Endothelial cell of umbilical vein (primary cell): ENCODE measurements at regions of chr16 and their contacts with region 1.

Region 1: DNA sequence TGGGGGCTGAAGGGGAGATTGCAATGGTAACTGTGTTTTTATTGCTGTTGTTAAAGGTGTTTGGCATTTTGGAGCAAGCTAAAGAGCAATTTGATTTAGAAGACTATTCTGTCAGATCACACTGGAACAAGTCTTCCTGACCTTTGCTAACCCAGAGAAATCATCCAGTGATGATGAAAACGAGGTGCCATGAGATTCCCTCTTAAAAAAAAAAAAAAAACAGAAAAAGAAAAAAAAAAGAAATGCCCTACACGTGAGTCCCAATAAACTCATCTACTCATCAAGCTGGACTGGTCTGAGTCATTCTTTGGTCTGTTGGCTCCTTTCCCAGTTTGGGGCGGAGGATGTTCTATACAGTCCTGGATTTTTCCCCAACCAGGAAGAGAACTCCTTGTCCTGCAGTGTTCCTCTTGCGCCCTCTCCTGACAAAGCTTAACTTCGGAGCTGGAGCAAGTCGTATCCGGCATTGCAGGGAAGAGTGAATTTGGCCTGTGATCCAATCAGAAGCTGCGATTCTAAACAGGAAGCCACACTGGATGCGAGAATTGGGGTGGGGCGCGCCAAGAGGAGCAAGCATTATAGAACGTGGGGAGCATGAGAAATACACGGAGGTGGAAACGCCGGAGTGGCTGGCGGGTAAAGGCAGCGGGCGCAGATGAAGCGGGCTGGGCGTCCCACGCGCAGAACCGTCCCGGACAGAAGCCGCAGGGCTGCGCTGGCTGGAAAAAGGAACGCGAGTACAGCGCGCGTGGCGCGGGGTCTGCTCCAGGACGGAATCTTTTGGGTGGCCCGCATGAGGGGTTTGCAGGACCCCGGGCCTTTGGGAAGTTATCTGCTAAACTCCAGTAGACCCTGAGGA is 22.4 kb upstream of the CRYM start:
- DNase-seq: peak; percentile 100
- H3K4me3 ChIP-seq: peak overlapping the region; percentile 61 to 65 (median 64)
- H3K27ac ChIP-seq: no peak overlapping the region
- H3K4me1 ChIP-seq: peaks cover 6% of the 10 kb centered on the region
- H3K27me3 ChIP-seq: peaks cover 2 to 12% of the 10 kb centered on the region in 2 experiments
- CTCF ChIP-seq: peak; percentile 80 to 95
- POLR2A ChIP-seq: no peak

Region 2: DNA sequence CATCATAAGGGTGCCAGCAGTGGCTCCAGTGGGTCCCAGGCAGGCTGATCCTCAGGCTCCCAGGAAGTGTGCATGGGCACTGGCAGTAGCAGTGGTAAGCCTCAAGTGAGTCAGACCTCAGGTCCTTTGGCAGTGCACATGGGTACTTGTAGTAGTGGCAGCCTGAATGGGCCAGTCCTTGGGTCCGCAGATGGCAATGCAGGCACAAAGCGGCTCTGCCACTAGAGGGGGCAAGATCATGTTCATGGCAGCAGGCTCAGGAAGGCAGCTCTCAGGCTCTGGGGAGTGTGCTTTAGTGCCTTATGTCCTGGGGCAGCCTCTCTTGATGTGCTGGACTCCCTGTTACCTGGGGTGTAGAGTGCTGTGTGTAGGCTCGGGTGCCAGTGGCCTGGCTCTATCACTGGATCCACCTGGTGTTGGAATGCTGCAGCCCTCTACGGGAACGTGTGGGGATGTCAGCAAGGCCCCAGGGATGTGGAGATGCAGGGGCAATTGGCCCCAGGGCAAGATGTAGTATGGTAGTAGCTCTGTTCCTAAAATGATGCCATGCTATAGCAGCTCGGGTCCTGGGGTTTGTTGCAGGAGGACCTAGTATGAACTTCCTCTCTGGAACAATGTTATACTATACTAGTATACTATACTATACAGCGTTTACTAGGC is 525.7 kb before region 1 on chr16:
- CTCF ChIA-PET with region 1: interaction called, 15 read pairs
- POLR2A ChIA-PET with region 1: no interaction called
- dilution Hi-C with region 1: no loop called
- intact Hi-C with region 1: no loop called
- DNase-seq: peak; percentile 70
- H3K4me3 ChIP-seq: no peak overlapping the region
- H3K27ac ChIP-seq: no peak overlapping the region
- H3K4me1 ChIP-seq: no peaks in the 10 kb centered on the region
- H3K27me3 ChIP-seq: peaks cover 0 to 1% of the 10 kb centered on the region in 2 experiments
- CTCF ChIP-seq: peak; percentile 85 to 94
- POLR2A ChIP-seq: no peak

Region 3: DNA sequence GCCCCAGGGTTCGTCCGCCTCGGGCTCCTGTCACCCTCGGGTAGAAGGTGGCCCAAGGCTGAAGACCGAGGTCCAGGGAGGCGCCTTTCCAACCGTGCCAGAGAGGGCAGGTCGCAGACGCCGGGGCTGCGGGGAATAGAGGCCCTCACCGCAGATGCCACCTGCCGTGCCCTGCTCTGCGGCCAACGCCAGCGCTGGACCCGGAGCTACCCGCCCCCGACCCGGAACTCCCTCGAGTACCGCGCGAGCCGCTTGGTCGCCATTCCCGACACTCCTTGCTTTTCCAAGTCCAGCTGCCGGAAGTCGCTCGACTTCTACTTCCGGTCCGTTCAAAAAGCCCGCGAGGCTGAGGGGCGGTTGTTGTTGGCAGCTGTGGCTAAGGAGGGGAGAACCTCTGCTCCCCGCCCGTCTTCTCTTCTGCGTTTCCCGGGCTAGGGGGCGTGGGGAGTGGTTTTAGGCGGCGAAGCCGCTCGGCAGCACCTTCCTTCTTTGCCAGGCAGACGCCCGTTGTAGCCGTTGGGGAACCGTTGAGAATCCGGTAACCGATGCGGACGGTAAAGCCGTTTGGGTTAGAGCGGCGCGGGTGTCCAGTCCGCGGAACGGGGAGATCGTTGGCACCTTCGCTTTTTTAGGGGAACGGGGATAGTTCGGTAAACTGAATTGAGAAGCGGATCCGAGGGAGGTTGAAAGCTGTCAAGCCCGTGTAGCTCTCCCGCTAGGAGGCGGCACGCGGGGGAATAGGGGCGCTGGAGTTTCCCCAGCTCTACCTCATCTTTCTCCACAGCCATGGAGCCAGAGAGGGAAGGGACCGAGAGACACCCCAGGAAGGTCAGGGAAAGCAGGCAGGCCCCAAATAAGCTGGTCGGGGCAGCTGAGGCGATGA is 494.1 kb before region 1 on chr16 and contains the starts of genes ERI2 and REXO5:
- CTCF ChIA-PET with region 1: interaction called, 10 read pairs
- POLR2A ChIA-PET with region 1: no interaction called
- dilution Hi-C with region 1: no loop called
- intact Hi-C with region 1: no loop called
- DNase-seq: peak; percentile 94
- H3K4me3 ChIP-seq: peak within 1 kb of the TSS; percentile 44 to 68 (median 50)
- H3K27ac ChIP-seq: peak within 1 kb of the TSS; percentile 49
- H3K4me1 ChIP-seq: peaks cover 8% of the 10 kb centered on the region
- H3K27me3 ChIP-seq: no peaks in the 10 kb centered on the region
- CTCF ChIP-seq: peak; percentile 36 to 66
- POLR2A ChIP-seq: peak; percentile 76
- total RNA-seq, gene ERI2: 8.9 and 9.3 TPM in 2 replicates
- total RNA-seq, gene REXO5: 7.4 and 11.5 TPM in 2 replicates

Region 4: DNA sequence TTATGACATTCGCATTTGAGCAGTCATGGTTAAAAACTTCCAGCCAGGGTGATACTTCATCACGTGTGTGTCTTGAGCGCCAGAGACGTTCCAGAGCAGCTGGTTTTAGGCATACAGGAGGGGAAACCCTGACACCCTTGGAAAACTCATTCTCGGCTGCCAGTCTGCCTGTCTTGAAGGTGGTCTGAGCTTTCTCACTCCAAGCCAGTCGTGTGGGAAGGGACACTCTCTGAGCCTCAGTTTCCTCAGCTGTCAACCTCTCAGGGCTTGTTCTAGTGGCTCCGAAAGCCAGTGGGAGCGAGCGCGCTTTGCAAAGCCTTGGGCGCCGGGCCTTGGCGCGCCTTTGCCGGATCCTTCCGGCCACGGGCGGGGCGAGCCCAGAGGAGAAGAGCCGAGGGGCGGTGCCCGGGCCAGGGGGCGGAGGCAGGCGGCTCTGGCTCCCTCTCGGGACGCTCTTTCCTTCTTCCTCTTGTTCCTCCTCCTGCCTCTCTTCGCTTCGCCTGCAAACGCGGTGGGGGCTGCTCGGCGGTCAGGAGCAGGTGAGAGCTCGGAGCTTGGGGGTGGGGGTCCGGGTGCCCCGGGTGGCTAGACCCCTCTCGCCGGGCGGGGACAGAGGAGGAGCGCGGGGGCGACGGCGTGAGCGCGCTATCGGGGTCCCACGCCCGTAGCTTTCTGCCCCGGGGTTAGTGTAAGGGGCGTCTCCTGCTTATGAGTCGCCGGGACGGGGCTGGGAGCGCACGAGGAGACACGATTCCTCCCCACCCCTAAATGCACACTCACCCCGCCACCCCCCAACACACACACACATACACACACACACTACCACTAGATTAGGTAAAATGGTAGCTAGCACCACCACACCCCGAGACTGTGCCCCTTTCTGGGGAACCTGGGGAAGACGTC is 142.1 kb before region 1 on chr16 and contains the start of gene LDAF1:
- CTCF ChIA-PET with region 1: interaction called, 117 read pairs
- POLR2A ChIA-PET with region 1: interaction called, 4 read pairs
- dilution Hi-C with region 1: no loop called
- intact Hi-C with region 1: loop called (anchors 1 kb)
- DNase-seq: peak; percentile 62
- H3K4me3 ChIP-seq: peak within 1 kb of the TSS; percentile 58 to 83 (median 64)
- H3K27ac ChIP-seq: no peak within 1 kb of the TSS
- H3K4me1 ChIP-seq: peaks cover 13% of the 10 kb centered on the region
- H3K27me3 ChIP-seq: no peaks in the 10 kb centered on the region
- CTCF ChIP-seq: no peak
- POLR2A ChIP-seq: no peak
- total RNA-seq, gene LDAF1: 19.4 and 20.4 TPM in 2 replicates

Region 5: DNA sequence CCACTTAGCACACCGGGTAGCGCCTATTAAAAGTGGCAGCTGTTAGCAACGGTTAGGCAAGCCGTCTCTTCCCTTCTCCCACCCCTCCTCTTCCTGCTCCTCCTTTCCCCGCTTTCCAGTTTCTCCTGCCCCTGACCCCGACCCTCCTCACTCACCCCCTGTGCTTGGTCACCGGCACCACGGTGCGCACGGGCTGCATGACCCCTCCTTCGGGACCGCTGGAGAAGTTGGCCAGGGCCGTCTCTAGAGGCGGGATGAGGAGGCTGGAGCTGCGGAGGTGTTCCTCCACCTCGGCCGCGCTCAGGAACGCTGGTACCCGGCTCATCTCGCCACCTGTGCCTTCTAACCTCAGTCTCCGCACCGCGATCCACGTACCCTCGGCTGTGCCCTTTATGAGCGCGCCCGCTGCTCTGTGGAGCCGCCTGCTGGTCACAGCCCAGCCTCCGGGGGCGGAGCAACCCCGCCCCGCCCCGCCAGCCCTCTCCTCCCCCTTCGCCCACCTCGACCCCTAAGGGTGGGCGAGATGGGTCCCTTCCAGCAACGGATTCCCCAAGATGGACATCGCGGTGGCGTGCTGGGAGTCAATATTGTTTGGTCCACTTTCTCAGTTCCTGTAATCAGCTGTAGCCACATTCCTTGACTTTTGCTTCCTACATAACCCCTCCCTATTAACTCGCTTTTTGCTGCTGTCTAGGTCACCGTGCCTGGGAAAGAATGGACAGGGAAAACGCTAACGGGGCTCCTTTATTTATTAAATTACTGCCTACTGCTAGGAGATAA is 22.4 kb before region 1 on chr16 and contains the start of gene CRYM:
- CTCF ChIA-PET with region 1: interaction called, 19 read pairs
- POLR2A ChIA-PET with region 1: no interaction called
- dilution Hi-C with region 1: no loop called
- intact Hi-C with region 1: no loop called
- DNase-seq: peak; percentile 36
- H3K4me3 ChIP-seq: peak within 1 kb of the TSS in 1 of 3 experiments; percentile 19
- H3K27ac ChIP-seq: no peak within 1 kb of the TSS
- H3K4me1 ChIP-seq: peaks cover 2% of the 10 kb centered on the region
- H3K27me3 ChIP-seq: peaks cover 25 to 36% of the 10 kb centered on the region in 2 experiments
- CTCF ChIP-seq: peak; percentile 57 to 86
- POLR2A ChIP-seq: no peak
- total RNA-seq, gene CRYM: not detected in 2 replicates

Region 6: DNA sequence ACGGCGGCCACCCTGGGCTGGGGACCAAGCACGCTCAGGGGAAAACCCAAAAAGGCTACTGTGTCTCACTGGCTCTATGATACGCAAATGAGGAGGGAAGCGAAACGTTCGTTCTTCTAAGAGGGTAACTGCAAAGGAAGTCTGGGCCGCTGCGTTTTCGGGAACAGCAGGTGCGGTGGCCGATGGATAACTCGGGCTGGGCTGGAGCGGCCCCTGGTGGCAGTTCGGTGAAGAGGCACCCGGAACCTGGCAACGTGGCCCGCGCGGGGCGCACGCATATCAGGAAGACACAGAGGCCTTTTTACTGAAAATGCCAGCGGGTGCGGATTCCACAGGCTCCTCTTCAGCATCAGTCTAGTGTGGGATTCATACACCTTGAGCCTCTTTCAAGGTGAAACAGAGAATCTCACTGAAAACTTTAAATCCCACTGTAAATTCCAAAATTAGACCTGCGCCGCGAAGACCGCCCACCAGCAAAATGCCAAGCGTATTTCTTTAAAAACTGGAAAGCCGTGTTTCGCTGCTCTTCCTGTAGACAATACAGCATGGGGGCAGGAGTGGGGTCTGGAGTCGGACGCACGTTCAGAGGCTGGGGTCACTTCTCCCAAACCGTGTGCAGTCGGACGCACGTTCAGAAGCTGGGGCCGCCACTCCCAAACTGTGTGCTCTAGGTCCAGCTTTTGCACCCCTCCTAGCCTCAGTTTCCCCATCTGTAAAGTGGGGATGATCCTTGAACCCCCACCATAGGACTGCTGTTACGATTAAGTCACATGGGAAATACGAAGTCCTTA is 254.5 kb after region 1 on chr16:
- CTCF ChIA-PET with region 1: interaction called, 6 read pairs
- POLR2A ChIA-PET with region 1: no interaction called
- dilution Hi-C with region 1: no loop called
- intact Hi-C with region 1: loop called (anchors 5 kb)
- DNase-seq: peak; percentile 66
- H3K4me3 ChIP-seq: no peak overlapping the region
- H3K27ac ChIP-seq: no peak overlapping the region
- H3K4me1 ChIP-seq: no peaks in the 10 kb centered on the region
- H3K27me3 ChIP-seq: peaks cover 0 to 3% of the 10 kb centered on the region in 2 experiments
- CTCF ChIP-seq: peak; percentile 96 to 100
- POLR2A ChIP-seq: no peak